ENCODE measurements at regions of chr22 and their contacts with region 1.

Region 1: DNA sequence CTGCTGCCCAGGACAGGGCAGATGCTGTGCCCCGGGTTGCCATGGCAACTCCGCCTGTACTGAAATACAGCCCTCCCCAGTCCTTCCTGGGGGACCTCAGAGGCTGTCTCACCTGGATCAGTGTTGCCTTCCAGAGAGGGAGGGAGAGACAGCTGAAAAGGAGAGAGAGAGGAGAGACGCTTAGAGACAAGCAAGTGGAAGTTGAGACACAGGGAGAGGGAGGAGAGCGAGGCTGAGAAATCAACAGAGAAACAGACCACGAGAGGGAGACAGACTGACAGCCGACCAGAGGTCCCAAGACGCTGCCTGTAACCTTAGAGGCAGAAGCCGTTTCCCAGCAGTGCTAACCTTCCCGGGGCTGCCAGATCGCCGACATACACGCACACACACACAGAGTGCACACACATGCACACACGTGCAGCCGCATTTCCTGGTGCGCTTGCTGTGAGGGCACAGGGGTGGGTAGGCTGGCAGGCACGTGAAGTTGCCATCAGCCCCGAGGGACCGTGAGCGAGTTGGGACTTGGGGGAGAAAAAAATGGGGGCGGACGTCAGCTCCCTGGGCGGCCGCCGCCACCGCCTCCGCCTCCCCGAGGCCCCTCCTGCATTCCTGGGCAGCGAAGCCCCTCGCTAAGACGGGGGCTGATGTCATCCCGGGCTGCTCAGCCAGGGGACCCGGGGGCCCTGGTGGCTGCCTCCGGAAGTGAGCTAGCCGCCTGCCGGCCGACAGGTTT is 88.6 kb upstream of the CRYBB3 start:
- DNase-seq: peak; percentile 49 to 70
- ATAC-seq: peak; percentile 82 to 89 (median 85)
- H3K4me3 ChIP-seq: peak overlapping the region; percentile 27 to 77 (median 61)
- H3K27ac ChIP-seq: peak overlapping the region; percentile 25 to 77 (median 68)
- H3K4me1 ChIP-seq: peaks cover 7 to 59% (median 31%) of the 10 kb centered on the region in 9 donors
- H3K27me3 ChIP-seq: peaks cover 0 to 18% (median 0%) of the 10 kb centered on the region in 7 donors
- CTCF ChIP-seq: peak; percentile 4 to 71 (median 63)

Region 2: DNA sequence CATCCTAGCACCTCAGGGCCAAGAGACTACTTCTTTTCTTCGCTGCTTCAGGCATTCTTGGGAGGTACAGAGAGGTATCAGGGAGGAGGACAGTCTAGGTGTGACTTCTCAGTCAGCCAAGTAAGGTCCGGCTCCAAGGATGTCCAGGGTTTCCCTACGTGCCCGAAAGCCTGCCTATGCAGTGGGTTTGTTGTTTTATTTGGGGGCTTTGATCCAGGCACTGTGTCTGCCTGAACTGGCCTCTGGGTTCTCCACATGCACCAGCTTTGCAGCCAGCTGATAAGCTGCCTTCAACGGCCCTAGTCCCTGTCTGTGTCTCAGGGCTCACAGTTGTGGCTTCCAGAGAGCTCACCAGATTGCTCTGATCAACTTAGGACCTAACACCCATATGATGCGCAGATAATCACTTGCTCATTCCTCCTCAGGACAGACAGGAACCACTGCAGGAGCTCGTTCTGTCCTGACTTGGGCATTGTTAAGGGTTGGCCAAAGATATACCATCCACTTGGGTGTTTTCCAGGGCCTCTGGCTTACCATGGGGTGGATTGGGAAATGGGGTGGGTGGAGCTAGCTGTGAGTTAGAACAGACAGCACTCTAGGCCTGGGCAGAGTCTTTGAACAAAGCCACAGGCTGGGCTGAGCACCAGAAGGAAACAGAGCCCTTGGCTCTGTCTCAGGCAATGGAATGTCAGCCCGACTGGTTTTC is 43.1 kb after region 1 on chr22:
- intact Hi-C with region 1: loop called in 1 of 10 experiments (anchors 5 kb)
- DNase-seq: peak; percentile 41 to 76
- ATAC-seq: peak; percentile 73 to 95 (median 92)
- H3K4me3 ChIP-seq: no peak overlapping the region
- H3K27ac ChIP-seq: peak overlapping the region in 9 of 10 donors; percentile 40 to 86 (median 59)
- H3K4me1 ChIP-seq: peaks cover 12 to 53% (median 30%) of the 10 kb centered on the region in 9 donors
- H3K27me3 ChIP-seq: no peaks in the 10 kb centered on the region
- CTCF ChIP-seq: no peak

Measured in heart right ventricle (tissue), 16 donors.